HCT116 (cell line): ENCODE measurements at regions of chr14 and their contacts with region 1.

Region 1: DNA sequence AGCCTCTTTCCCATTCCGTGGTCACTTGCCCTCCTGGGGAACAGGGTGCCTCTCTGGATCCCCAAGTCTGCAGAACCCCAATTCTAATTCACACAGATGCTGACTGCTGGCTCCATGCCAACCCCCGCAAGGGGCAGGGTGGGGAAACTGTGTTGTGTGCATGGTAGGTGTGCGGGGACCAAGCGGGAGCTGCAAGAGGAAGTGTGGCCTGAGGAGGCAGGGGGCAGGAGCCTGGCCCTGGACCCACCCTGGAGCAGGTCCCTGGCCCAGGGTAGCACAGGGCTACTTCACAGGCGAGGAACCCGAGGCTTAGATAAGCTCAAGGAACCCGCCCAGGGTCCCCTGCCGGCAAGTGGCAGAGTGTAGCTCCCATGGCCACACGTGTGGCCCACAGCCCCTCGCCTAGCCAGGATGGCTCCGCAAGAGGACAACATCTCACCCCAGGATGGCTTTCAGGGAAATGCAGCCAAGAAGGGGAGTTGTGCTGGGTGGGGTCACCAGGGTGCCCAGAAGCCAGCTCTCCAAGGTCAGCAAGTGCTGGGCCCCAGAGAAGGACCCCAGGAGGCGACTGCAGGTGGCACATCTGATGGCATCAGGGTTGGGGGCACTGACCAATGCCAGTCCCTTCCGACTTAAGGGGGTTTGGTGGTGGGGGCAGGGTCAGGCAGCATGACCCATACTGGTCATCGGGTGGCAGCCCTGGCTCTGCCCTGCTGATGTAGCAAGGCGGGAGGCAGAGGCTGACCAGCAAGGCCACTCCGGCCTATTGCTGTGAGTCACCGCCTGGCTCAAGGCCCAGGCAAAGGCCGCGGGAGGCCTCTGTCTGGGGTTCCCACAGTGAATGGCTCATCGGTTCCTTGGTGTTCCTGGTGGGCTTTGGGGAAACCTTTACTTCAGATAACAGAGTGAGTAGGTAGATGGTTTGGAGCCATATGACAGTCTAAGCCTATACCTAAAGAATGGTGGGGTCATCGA is 37.3 kb upstream of the EML1 start:
- DNase-seq: no peak
- ATAC-seq: peak; percentile 82
- H3K4me3 ChIP-seq: no peak overlapping the region
- H3K27ac ChIP-seq: no peak overlapping the region
- H3K4me1 ChIP-seq: peaks cover 28 to 68% of the 10 kb centered on the region in 2 experiments
- H3K27me3 ChIP-seq: no peaks in the 10 kb centered on the region; the same call in 1 of the 2 replicates
- CTCF ChIP-seq: no peak
- POLR2A ChIP-seq: no peak
- RAD21 ChIP-seq: no peak

Region 2: GRCh38 chr14:99793213-99794150 is 37.6 kb after region 1 on chr14 and contains the start of gene EML1:
- CTCF ChIA-PET with region 1: no interaction called
- POLR2A ChIA-PET with region 1: no interaction called
- RAD21 ChIA-PET with region 1: no interaction called
- intact Hi-C with region 1: loop called (anchors 5 kb)
- DNase-seq: peak; percentile 23
- ATAC-seq: peak; percentile 95
- H3K4me3 ChIP-seq: peak within 1 kb of the TSS; percentile 53 to 60
- H3K27ac ChIP-seq: peak within 1 kb of the TSS; percentile 50; the same call in 1 of the 2 replicates
- H3K4me1 ChIP-seq: peaks cover 7 to 9% of the 10 kb centered on the region in 2 experiments; a peak in 2 of 4 replicates
- H3K27me3 ChIP-seq: peaks cover 28% of the 10 kb centered on the region; the same call in 1 of the 2 replicates
- CTCF ChIP-seq: no peak
- POLR2A ChIP-seq: no peak
- RAD21 ChIP-seq: no peak; the same call in 1 of the 2 replicates
- total RNA-seq, gene EML1: 7.4 TPM

Region 3: GRCh38 chr14:100239840-100240724 is 484.2 kb after region 1 on chr14:
- CTCF ChIA-PET with region 1: no interaction called
- POLR2A ChIA-PET with region 1: no interaction called
- RAD21 ChIA-PET with region 1: no interaction called
- intact Hi-C with region 1: no loop called
- DNase-seq: peak; percentile 68
- ATAC-seq: peak; percentile 56
- H3K4me3 ChIP-seq: peak overlapping the region; percentile 83 to 98
- H3K27ac ChIP-seq: peak overlapping the region; percentile 99
- H3K4me1 ChIP-seq: peaks cover 11 to 34% of the 10 kb centered on the region in 2 experiments
- H3K27me3 ChIP-seq: no peaks in the 10 kb centered on the region
- CTCF ChIP-seq: peak; percentile 40 to 49 (median 47); a peak in 5 of 6 replicates
- POLR2A ChIP-seq: no peak
- RAD21 ChIP-seq: no peak